ENCODE measurements at regions of chr7 and their contacts with region 1.

Region 1: DNA sequence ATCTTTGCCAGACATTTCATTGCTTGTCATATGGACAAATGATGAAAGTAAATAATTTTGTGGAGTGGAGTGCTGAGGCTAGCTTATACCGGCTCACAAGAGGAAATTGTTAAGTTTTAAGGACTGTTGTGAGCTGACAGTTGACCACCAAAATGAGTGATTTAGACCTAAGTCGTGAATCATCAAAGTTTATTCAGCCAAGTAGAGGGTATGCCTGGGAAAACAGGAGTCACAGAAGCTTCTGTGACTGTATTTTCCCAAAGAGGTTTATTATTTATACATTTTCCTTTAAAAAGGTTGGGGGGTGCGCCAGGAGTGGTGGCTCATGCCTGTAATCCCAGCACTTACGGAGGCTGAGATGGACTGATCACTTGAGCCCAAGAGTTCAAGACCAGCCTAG is 21.8 kb downstream of the MRPS24 start:
- DNase-seq: no peak
- ATAC-seq: no peak
- H3K4me3 ChIP-seq: no peak overlapping the region
- H3K27ac ChIP-seq: no peak overlapping the region
- H3K4me1 ChIP-seq: no peaks in the 10 kb centered on the region
- H3K27me3 ChIP-seq: peaks cover 0 to 20% (median 0%) of the 10 kb centered on the region in 7 donors
- CTCF ChIP-seq: no peak

Region 2: GRCh38 chr7:43711503-43711902 is 136.0 kb before region 1 on chr7:
- intact Hi-C with region 1: loop called in 1 of 10 experiments (anchors 10 kb)
- DNase-seq: no peak
- ATAC-seq: no peak
- H3K4me3 ChIP-seq: no peak overlapping the region
- H3K27ac ChIP-seq: no peak overlapping the region
- H3K4me1 ChIP-seq: peaks cover 0 to 17% (median 8%) of the 10 kb centered on the region in 9 donors
- H3K27me3 ChIP-seq: no peaks in the 10 kb centered on the region
- CTCF ChIP-seq: no peak

Region 3: DNA sequence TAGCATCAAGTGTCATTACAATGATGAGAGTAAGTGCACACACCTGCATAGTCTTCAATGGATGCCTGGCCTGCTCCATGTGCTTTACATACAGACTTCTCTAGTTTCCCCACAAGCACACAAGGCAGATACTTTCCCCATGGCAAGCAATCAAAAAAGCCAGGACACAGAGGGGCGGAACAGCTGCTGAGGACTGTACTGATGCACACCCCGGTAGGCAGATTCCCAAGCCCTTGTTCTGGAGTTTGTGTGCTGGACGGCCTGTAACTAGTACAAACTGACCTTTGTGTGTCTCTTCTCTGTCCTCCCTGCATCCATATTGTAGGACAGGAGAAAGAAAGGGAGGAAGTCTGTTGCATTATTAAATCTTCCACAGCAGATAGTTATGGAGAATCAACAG is 104.5 kb after region 1 on chr7:
- intact Hi-C with region 1: no loop called
- DNase-seq: no peak
- ATAC-seq: peak in 1 of 8 donors; percentile 68
- H3K4me3 ChIP-seq: no peak overlapping the region
- H3K27ac ChIP-seq: no peak overlapping the region
- H3K4me1 ChIP-seq: no peaks in the 10 kb centered on the region
- H3K27me3 ChIP-seq: no peaks in the 10 kb centered on the region
- CTCF ChIP-seq: no peak

Measured in heart right ventricle (tissue), 16 donors.